Mammary epithelial cell (primary cell): ENCODE measurements at regions of chr20 and their contacts with region 1.

Region 1: DNA sequence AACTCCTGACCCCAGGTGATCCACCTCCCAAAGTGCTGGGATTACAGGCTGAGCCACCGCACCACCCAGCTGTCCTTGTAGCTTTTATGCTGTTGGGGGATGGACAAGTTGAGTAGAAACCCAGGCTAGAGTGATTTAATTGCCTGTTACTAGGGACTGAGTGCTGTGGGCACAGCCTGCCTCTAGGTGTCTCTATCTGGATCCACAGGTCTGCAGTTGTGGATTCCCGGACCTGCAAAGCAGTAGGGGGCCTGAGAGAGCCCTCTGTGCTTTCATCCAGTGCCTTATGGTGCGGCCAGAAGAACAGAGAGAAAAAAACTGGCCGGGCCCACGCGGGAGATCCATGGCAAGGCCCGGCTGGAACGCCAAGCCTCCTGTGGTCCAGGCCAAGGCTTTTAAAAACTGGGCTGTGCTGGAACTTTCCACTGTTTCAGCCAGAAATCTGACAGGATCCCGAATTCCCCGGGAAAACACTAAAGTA is 5.2 kb downstream of the SIRPA start:
- DNase-seq: peak; percentile 65
- H3K4me3 ChIP-seq: no peak overlapping the region
- H3K27ac ChIP-seq: no peak overlapping the region
- H3K4me1 ChIP-seq: peaks cover 19% of the 10 kb centered on the region
- H3K27me3 ChIP-seq: no peaks in the 10 kb centered on the region
- CTCF ChIP-seq: peak; percentile 74 to 78

Region 2: DNA sequence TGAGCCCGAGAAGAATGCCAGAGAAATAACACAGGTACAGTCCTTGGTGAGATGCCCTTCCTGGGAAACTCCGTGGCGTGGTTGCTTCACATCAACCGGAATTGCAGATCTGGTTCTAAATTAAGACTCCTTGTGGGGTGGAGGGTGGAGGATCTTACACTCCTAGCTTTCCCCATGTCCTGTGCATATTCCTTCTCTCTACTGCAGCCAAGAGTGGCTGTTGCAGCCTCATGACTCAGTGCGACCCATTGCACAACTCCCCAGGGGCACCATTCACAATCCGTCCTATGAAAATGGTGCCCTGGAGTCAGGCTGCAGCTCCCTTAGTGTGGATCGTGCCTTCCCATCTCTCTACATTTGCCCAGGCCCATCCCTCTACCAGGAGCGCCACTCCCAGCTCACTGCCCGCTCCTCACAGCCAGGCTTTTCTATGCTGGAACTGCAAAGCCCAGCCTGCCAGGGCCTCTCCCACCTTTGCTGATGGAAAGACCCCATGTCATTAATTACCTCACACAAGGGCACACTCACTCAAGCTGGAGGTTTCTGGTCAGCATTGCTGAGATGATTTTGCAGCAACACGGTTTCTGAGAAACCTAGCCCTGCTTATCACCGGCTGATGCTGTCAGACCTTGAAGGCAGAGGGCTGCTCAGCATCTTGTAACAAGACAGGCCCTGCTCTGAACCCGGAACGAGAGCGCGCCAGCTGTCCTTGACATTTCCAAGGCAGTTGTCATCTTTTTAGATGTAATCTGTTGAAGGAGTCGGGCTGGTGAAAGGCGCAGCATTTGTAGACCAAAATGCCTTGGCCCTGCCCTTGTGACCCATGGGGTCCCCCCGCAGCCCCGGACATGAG is 34.6 kb after region 1 on chr20:
- CTCF ChIA-PET with region 1: no interaction called
- dilution Hi-C with region 1: no loop called
- in situ Hi-C with region 1: no loop called
- intact Hi-C with region 1: loop called (anchors 2 kb)
- DNase-seq: peak; percentile 88
- H3K4me3 ChIP-seq: no peak overlapping the region
- H3K27ac ChIP-seq: peak overlapping the region; percentile 37
- H3K4me1 ChIP-seq: peaks cover 34% of the 10 kb centered on the region
- H3K27me3 ChIP-seq: no peaks in the 10 kb centered on the region
- CTCF ChIP-seq: no peak

Region 3: GRCh38 chr20:1952737-1953530 is 52.6 kb after region 1 on chr20:
- CTCF ChIA-PET with region 1: no interaction called
- dilution Hi-C with region 1: loop called (anchors 5 kb)
- in situ Hi-C with region 1: no loop called
- intact Hi-C with region 1: no loop called
- DNase-seq: no peak
- H3K4me3 ChIP-seq: no peak overlapping the region
- H3K27ac ChIP-seq: no peak overlapping the region
- H3K4me1 ChIP-seq: no peaks in the 10 kb centered on the region
- H3K27me3 ChIP-seq: no peaks in the 10 kb centered on the region
- CTCF ChIP-seq: no peak

Region 4: DNA sequence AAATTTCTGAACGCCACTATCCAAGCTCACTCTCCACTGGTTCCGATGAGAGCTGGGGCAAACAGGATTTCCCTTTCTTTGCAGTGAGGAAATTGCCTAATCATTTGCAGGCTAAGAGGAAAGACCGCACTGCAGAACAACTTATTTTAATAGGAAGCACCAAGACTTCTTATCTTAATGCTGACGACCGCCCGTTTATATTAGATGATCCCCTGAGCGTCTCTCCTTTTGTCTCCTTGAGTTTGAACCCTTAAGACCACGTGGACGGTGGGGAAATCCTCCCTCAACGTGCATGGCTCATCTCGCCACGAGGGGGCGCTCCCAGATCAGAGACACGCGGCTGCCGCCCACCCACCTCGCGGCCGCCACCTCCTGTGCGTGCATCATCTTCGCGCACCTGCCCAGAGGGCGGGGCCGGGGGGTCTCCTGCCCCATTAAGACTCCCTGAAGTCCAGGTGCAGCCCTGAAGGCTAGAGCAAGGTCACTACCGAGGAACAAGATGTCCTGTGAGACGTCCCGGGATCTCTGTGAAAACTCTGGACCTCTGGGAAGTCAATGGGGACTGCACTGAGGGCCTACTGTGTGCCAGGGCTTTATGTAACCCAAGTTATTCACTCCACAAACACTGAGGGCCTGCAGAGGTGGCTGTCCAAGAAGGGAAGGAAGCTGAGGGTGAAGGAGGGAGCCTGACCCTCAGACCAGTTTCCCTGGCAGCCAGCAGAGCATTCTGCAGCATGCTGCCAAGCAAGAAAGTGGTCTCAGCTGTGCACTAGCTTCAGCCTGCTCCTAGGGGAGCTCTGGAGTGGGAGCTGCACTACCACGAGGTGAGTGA is 65.4 kb after region 1 on chr20:
- CTCF ChIA-PET with region 1: no interaction called
- dilution Hi-C with region 1: no loop called
- in situ Hi-C with region 1: no loop called
- intact Hi-C with region 1: loop called (anchors 2 kb)
- DNase-seq: peak; percentile 37
- H3K4me3 ChIP-seq: no peak overlapping the region
- H3K27ac ChIP-seq: no peak overlapping the region
- H3K4me1 ChIP-seq: peaks cover 3% of the 10 kb centered on the region
- H3K27me3 ChIP-seq: no peaks in the 10 kb centered on the region
- CTCF ChIP-seq: peak; percentile 82 to 94